ENCODE measurements at regions of chr19 and their contacts with region 1.

Region 1: DNA sequence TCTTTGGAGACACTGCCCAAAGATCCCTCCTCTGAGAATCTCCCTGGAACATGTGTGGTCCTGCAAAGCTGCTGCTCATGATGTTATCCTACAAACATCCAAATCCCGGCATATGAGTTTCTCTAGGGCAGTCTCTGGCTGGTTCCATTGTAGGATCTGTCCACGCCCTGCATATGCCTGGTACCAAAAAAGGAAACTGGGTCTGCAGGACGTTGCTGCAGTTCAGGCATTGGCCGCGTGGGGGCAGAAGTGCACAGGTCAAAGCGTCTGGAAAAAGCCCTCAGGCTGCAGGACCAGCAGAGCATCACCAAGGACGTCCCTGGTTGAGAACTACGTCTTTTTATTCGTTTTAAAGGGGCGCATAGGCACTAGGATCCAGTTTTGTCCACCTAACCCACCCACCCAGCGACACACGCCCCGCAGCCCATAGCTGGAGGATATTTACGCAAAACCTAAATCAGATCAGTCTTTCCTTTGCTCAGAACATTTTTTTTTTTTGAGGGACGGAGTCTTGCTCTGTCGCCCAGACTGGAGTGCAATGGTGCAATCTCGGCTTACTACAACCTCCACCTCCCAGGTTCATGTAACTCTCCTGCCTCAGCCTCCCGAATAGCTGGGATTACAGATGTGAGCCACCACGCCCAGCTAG is 12.9 kb upstream of the ZNF564 start:
- DNase-seq: peak; percentile 84 to 90 (median 85)
- H3K4me3 ChIP-seq: no peak overlapping the region
- H3K4me3 Mint-ChIP-seq: peak overlapping the region in 1 of 8 donors; percentile 33
- H3K27ac ChIP-seq: no peak overlapping the region
- H3K27ac Mint-ChIP-seq: peak overlapping the region in 1 of 7 donors; percentile 53
- H3K4me1 ChIP-seq: no peaks in the 10 kb centered on the region
- H3K4me1 Mint-ChIP-seq: peaks cover 4 to 5% (median 5%) of the 10 kb centered on the region in 4 donors
- H3K27me3 ChIP-seq: no peaks in the 10 kb centered on the region
- H3K27me3 Mint-ChIP-seq: no peaks in the 10 kb centered on the region

Region 2: GRCh38 chr19:12202250-12202649 is 361.9 kb before region 1 on chr19:
- CTCF ChIA-PET with region 1: interaction called, 5 read pairs
- POLR2A ChIA-PET with region 1: no interaction called
- intact Hi-C with region 1: loop called (anchors 2 kb)
- DNase-seq: peak; percentile 41 to 57 (median 50)
- H3K4me3 ChIP-seq: no peak overlapping the region
- H3K4me3 Mint-ChIP-seq: no peak overlapping the region
- H3K27ac ChIP-seq: no peak overlapping the region
- H3K27ac Mint-ChIP-seq: no peak overlapping the region
- H3K4me1 ChIP-seq: peaks cover 8% of the 10 kb centered on the region
- H3K4me1 Mint-ChIP-seq: peaks cover 6 to 24% (median 6%) of the 10 kb centered on the region in 4 donors
- H3K27me3 ChIP-seq: no peaks in the 10 kb centered on the region
- H3K27me3 Mint-ChIP-seq: no peaks in the 10 kb centered on the region

Region 3: DNA sequence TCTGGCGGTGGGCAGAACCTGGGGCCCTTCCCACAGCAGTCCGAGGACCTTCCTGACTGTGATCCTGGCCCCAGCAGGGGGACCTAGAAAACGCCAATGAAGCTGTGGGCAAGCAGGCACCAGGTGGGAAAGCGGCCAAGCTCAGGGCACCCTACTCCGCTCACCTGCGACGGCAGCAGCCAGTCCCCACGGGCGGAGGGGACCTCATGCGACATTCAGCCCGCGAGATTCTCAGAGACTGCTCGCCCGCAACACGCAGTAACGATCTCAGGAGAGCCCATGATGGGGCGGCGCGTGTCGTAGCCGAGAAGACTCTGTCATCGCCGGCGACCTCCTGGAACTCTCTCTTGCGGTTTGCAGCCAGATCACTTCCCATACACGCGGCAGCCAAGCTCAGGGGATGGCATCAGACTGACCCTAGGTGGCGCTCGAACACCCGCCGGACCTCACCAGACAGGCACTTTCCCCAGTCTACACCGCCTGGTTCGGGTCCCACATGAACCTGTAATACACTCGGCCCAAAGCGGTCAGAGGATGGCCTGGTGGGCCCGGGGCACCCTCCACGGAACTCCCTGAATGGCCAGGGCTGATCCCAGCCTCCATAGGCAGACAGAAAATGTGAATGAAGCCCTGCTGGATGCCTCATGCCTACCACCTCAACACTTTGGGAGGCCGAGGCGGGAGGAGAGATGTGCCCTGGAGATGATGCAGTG is 75.9 kb after region 1 on chr19:
- CTCF ChIA-PET with region 1: interaction called, 4 read pairs
- POLR2A ChIA-PET with region 1: no interaction called
- intact Hi-C with region 1: loop called (anchors 1 kb)
- DNase-seq: peak; percentile 71 to 82 (median 75)
- H3K4me3 ChIP-seq: no peak overlapping the region
- H3K4me3 Mint-ChIP-seq: peak overlapping the region; percentile 68 to 82 (median 76)
- H3K27ac ChIP-seq: no peak overlapping the region
- H3K27ac Mint-ChIP-seq: peak overlapping the region; percentile 14 to 92 (median 54)
- H3K4me1 ChIP-seq: peaks cover 18% of the 10 kb centered on the region
- H3K4me1 Mint-ChIP-seq: peaks cover 11 to 15% (median 14%) of the 10 kb centered on the region in 4 donors
- H3K27me3 ChIP-seq: no peaks in the 10 kb centered on the region
- H3K27me3 Mint-ChIP-seq: no peaks in the 10 kb centered on the region

Region 4: GRCh38 chr19:12666265-12667048 is 102.3 kb after region 1 on chr19 and contains the starts of genes MAN2B1 and WDR83:
- CTCF ChIA-PET with region 1: interaction called, 51 read pairs
- POLR2A ChIA-PET with region 1: interaction called, 3 read pairs
- intact Hi-C with region 1: no loop called
- DNase-seq: peak; percentile 73 to 81 (median 78)
- H3K4me3 ChIP-seq: peak within 1 kb of the TSS; percentile 65 to 91
- H3K4me3 Mint-ChIP-seq: peak within 1 kb of the TSS; percentile 91 to 99 (median 94)
- H3K27ac ChIP-seq: peak within 1 kb of the TSS; percentile 98
- H3K27ac Mint-ChIP-seq: peak within 1 kb of the TSS; percentile 90 to 99 (median 97)
- H3K4me1 ChIP-seq: peaks cover 52% of the 10 kb centered on the region
- H3K4me1 Mint-ChIP-seq: peaks cover 24 to 70% (median 46%) of the 10 kb centered on the region in 4 donors
- H3K27me3 ChIP-seq: no peaks in the 10 kb centered on the region
- H3K27me3 Mint-ChIP-seq: no peaks in the 10 kb centered on the region
- total RNA-seq, gene MAN2B1: 137 to 141 TPM
- total RNA-seq, gene WDR83: 18.3 to 19.3 TPM

Region 5: DNA sequence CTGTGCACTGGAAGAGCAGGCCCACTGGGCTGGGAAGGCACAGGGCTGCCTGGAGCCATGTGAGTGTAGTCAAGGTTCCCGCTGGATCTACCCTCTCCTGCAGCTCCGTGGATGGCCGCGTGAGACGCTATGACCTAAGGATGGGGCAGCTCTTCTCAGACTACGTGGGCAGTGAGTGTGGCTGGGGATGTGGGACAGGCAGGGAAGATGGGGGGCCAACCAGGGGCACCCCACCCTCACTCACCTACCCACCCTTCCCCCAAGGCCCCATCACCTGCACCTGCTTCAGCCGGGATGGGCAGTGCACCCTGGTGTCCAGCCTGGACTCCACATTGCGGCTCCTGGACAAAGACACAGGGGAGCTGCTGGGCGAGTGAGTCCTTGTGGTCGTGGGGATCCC is 108.6 kb after region 1 on chr19:
- CTCF ChIA-PET with region 1: interaction called, 51 read pairs
- POLR2A ChIA-PET with region 1: interaction called, 3 read pairs
- intact Hi-C with region 1: loop called (anchors 1 kb)
- DNase-seq: no peak
- H3K4me3 ChIP-seq: no peak overlapping the region
- H3K4me3 Mint-ChIP-seq: no peak overlapping the region
- H3K27ac ChIP-seq: no peak overlapping the region
- H3K27ac Mint-ChIP-seq: peak overlapping the region in 1 of 7 donors; percentile 79
- H3K4me1 ChIP-seq: peaks cover 35% of the 10 kb centered on the region
- H3K4me1 Mint-ChIP-seq: peaks cover 22 to 50% (median 36%) of the 10 kb centered on the region in 4 donors
- H3K27me3 ChIP-seq: no peaks in the 10 kb centered on the region
- H3K27me3 Mint-ChIP-seq: no peaks in the 10 kb centered on the region